ENCODE measurements at regions of chr12 and their contacts with region 1.

Region 1: GRCh38 chr12:34218165-34219045 is 196.1 kb downstream of the ALG10 start:
- H3K4me3 Mint-ChIP-seq: peak overlapping the region; percentile 75
- H3K27ac Mint-ChIP-seq: peak overlapping the region; percentile 52
- H3K4me1 Mint-ChIP-seq: peaks cover 14% of the 10 kb centered on the region
- H3K27me3 Mint-ChIP-seq: peaks cover 23% of the 10 kb centered on the region

Region 2: GRCh38 chr12:33771889-33772288 is 446.5 kb before region 1 on chr12:
- intact Hi-C with region 1: no loop called
- H3K4me3 Mint-ChIP-seq: no peak overlapping the region
- H3K27ac Mint-ChIP-seq: no peak overlapping the region
- H3K4me1 Mint-ChIP-seq: no peaks in the 10 kb centered on the region
- H3K27me3 Mint-ChIP-seq: no peaks in the 10 kb centered on the region

Region 3: GRCh38 chr12:34126239-34126641 is 92.2 kb before region 1 on chr12:
- intact Hi-C with region 1: loop called (anchors 1 kb)
- H3K4me3 Mint-ChIP-seq: peak overlapping the region; percentile 7
- H3K27ac Mint-ChIP-seq: no peak overlapping the region
- H3K4me1 Mint-ChIP-seq: peaks cover 14% of the 10 kb centered on the region
- H3K27me3 Mint-ChIP-seq: no peaks in the 10 kb centered on the region